Sigmoid colon (tissue), 7 donors: ENCODE measurements at regions of chr6 and their contacts with region 1.

Region 1: GRCh38 chr6:154515826-154516225 is 5.3 kb upstream of the CNKSR3 start:
- DNase-seq: no peak
- H3K4me3 ChIP-seq: peak overlapping the region in 2 of 4 donors; percentile 13 to 25
- H3K27ac ChIP-seq: peak overlapping the region in 2 of 4 donors; percentile 39
- H3K4me1 ChIP-seq: peaks cover 0 to 13% (median 10%) of the 10 kb centered on the region in 4 donors
- H3K27me3 ChIP-seq: no peaks in the 10 kb centered on the region
- CTCF ChIP-seq: no peak
- EP300 ChIP-seq: no peak
- POLR2A ChIP-seq: no peak

Region 2: DNA sequence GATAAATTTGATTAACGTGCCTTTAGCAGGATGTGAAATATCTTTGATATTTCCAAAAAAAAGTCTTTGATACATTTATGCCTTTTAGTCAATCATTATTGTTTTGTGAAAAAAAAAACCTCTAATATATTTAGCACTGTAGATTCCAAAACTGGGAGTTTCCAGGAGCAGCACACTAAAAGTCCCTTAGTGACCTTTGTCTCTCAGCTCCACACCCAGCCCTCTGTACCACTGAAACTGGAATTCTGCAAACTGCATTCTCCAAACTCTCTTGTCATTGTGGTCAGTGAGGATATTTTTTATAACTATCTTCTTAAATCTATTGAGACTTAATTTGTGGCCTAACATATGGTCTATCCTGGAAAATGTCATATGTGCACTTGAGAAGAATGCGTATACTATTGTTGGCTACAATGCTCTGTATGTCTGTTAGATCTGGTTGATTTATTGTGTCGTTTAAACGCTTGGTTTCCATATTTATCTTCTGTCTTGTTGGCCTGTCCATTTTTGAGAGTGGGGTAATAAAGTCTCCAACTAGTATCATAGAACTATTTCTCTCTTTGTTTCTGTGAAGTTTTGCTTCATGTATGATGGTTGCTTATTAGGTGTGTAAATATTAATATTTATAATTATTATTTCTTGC is 67.8 kb after region 1 on chr6:
- intact Hi-C with region 1: loop called (anchors 2 kb)
- DNase-seq: no peak
- H3K4me3 ChIP-seq: no peak overlapping the region
- H3K27ac ChIP-seq: peak overlapping the region in 2 of 4 donors; percentile 22 to 35
- H3K4me1 ChIP-seq: peaks cover 0 to 29% (median 0%) of the 10 kb centered on the region in 4 donors
- H3K27me3 ChIP-seq: no peaks in the 10 kb centered on the region
- CTCF ChIP-seq: no peak
- EP300 ChIP-seq: no peak
- POLR2A ChIP-seq: no peak

Region 3: GRCh38 chr6:154865291-154865690 is 349.5 kb after region 1 on chr6:
- intact Hi-C with region 1: no loop called
- DNase-seq: no peak
- H3K4me3 ChIP-seq: no peak overlapping the region
- H3K27ac ChIP-seq: no peak overlapping the region
- H3K4me1 ChIP-seq: peaks cover 0 to 8% (median 0%) of the 10 kb centered on the region in 4 donors
- H3K27me3 ChIP-seq: no peaks in the 10 kb centered on the region
- CTCF ChIP-seq: no peak
- EP300 ChIP-seq: no peak
- POLR2A ChIP-seq: no peak